Aorta (tissue), 5 donors: ENCODE measurements at regions of chr22 and their contacts with region 1.

Region 1: GRCh38 chr22:42901790-42902508 is 44.9 kb upstream of the ARFGAP3 start:
- DNase-seq: no peak
- ATAC-seq: no peak
- H3K4me3 ChIP-seq: no peak overlapping the region
- H3K27ac ChIP-seq: no peak overlapping the region
- H3K4me1 ChIP-seq: peaks cover 0 to 4% of the 10 kb centered on the region in 2 donors
- H3K27me3 ChIP-seq: no peaks in the 10 kb centered on the region

Region 2: DNA sequence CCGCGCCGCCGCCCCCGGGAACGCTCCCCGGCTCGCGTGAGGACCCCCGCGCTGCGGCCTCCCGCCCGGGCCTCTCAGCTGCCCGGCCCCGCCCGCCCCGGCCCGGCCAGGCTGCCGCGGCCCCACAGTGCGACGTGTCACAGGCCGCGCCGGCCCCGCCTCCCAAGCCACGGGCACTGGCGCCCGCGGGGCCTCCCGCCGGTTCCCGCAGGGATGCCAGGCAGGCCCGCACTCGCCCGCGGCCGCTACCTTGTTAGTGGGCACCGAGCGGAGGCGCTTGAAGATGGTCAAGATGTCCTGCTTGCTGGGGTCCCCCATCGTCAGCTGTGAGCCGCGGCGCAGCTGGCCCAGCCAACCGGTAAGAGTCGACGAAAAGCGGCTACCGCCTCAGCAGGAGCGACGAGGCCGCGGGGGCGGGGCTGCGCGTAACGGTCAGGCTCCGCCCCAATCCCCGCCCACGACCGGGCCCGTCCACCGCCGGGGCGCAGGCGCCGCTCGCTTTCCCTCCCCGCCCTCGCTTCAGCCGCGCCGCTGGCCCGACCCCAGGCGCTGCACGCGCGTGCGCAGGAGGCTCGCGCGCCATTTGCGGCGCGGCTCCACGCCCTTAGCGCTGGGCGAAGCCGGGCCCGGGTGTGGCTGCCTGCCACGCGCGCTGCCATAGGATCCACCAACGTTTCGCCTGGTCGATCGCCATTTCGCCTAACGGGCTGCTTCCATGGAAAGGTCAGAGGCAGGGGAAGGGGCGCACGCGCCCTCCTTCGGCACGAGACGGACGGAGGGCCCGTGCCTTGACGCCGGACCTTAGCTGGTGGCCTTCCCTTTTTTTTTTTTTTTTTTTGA is 44.9 kb before region 1 on chr22 and contains the start of gene ARFGAP3:
- intact Hi-C with region 1: no loop called
- DNase-seq: peak; percentile 95 to 98
- ATAC-seq: peak; percentile 97
- H3K4me3 ChIP-seq: peak within 1 kb of the TSS; percentile 56 to 96
- H3K27ac ChIP-seq: peak within 1 kb of the TSS; percentile 71 to 96
- H3K4me1 ChIP-seq: peaks cover 0 to 3% of the 10 kb centered on the region in 2 donors
- H3K27me3 ChIP-seq: no peaks in the 10 kb centered on the region
- total RNA-seq, gene ARFGAP3: 45.9 to 60.5 TPM

Region 3: GRCh38 chr22:42939941-42940653 is 38.1 kb after region 1 on chr22:
- intact Hi-C with region 1: loop called in 1 of 2 experiments (anchors 5 kb)
- DNase-seq: peak; percentile 60 to 75
- ATAC-seq: peak; percentile 54
- H3K4me3 ChIP-seq: no peak overlapping the region
- H3K27ac ChIP-seq: peak overlapping the region; percentile 95 to 99
- H3K4me1 ChIP-seq: peaks cover 7% of the 10 kb centered on the region in 2 donors
- H3K27me3 ChIP-seq: no peaks in the 10 kb centered on the region

Region 4: GRCh38 chr22:42959576-42960509 is 57.9 kb after region 1 on chr22:
- intact Hi-C with region 1: no loop called
- DNase-seq: peak; percentile 63 to 71
- ATAC-seq: peak; percentile 84
- H3K4me3 ChIP-seq: peak overlapping the region; percentile 17 to 71
- H3K27ac ChIP-seq: peak overlapping the region in 1 of 2 donors; percentile 69
- H3K4me1 ChIP-seq: peaks cover 3 to 8% of the 10 kb centered on the region in 2 donors
- H3K27me3 ChIP-seq: no peaks in the 10 kb centered on the region

Region 5: DNA sequence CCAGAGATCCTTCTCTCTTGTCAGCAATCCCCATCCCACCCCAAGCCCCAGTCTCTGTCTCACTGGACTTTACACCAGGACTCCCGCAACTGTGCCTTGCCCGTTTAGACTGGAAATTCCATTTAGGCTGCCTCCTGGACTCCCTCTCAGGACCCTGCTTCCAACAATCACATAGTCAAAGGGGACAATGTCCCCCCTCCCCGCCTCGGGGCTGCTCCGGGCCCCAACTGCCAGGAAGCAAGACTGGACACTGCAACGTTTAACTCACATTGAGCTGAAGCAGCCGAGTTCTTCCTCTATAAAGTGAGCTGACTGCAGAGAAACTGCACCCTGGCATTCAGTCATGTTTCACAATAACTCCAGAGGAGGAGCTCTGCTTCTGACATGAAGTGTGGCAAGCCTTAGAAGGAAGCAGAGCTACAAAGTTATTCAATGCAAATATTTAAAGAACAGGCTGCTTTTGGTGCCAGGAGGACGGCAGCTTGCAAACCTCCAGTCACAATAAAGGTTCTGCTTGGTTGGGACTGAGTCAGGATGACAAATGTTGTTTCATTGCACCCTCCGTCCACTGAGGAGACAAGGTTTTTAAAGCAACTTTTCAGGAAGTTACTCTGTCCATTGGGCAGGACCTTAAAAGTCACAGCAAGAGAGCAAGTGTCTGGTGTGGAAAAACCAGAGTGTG is 93.1 kb after region 1 on chr22:
- intact Hi-C with region 1: loop called in 1 of 2 experiments (anchors 5 kb)
- DNase-seq: peak; percentile 71 to 79
- ATAC-seq: peak; percentile 82
- H3K4me3 ChIP-seq: peak overlapping the region; percentile 41 to 42
- H3K27ac ChIP-seq: peak overlapping the region; percentile 79 to 89
- H3K4me1 ChIP-seq: peaks cover 7 to 14% of the 10 kb centered on the region in 2 donors
- H3K27me3 ChIP-seq: no peaks in the 10 kb centered on the region

Region 6: DNA sequence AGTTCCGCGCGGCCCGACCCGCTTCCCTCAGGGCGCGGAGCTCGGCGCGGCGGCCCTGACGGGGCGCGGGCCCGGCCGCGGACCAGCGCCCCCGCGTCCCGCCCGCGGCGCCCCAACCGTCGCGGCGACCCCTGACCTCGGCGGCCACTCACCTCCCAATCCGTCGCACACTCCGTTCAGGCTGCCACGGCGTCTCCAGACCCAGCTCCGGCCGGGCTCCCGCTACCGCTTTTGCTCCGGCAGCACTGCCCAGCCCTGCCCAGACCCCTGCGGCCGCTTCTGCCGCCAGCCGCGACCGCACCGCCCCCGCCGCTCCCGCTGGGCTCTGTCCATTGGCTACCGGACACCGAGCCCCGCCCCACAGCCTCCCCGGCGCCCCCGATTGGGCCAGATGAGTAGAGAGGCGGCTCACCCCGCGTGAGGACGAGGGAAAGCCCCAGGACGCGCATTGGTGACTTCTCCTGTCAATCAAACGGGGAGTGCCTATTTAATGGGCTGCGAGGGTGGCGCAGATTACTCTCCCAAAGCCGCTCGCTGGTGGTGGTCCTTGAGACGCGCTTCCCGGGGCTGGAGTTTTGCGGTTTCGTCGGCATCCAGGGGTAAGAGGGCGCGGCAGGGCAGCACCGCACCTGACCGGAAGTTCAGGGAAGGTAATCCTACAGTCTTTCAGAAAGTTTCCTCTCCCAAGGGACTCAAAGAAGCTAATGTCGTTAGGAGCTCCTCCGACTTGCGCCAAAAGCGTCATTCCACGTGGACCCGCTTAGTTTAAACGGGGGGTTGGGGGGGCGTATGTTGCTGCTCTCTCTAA is 113.1 kb after region 1 on chr22 and contains the start of gene PACSIN2:
- intact Hi-C with region 1: loop called in 1 of 2 experiments (anchors 10 kb)
- DNase-seq: peak; percentile 99 to 100
- ATAC-seq: peak; percentile 100
- H3K4me3 ChIP-seq: peak within 1 kb of the TSS; percentile 64 to 94
- H3K27ac ChIP-seq: peak within 1 kb of the TSS in 1 of 2 donors; percentile 61
- H3K4me1 ChIP-seq: no peaks in the 10 kb centered on the region
- H3K27me3 ChIP-seq: no peaks in the 10 kb centered on the region
- total RNA-seq, gene PACSIN2: 59.1 to 127 TPM